ENCODE measurements at regions of chr20 and their contacts with region 1.

Region 1: DNA sequence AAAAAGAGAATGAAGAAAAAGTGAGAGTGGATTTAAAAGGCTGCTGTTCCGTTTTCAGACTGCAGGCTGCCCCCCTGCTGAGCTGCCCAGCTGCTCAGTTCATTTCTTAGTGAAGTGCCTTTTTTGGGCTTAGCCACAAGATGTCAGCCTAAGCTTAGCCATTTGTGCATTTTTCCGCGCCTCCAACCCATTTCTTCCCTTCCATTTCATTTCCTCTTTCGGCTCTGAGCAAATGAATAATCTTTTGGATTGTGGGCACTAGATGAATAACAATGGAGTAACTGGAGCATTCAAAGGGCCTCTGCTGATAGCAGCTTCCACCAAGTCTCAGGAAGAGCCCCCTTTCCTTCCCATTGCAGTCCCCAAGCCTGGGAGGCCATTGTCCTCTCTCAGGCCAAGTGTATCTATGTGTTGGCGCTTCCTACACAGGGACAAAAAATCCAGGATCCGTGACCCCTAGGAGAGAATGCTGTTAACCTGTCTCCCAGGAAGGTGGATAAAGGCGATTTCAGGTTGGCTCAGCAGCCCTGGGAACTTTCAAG is 83.5 kb upstream of the SPTLC3 start:
- DNase-seq: peak; percentile 63 to 69
- H3K4me3 ChIP-seq: no peak overlapping the region
- H3K27ac ChIP-seq: no peak overlapping the region
- H3K4me1 ChIP-seq: peaks cover 34% of the 10 kb centered on the region
- H3K27me3 ChIP-seq: no peaks in the 10 kb centered on the region
- CTCF ChIP-seq: peak; percentile 85

Region 2: DNA sequence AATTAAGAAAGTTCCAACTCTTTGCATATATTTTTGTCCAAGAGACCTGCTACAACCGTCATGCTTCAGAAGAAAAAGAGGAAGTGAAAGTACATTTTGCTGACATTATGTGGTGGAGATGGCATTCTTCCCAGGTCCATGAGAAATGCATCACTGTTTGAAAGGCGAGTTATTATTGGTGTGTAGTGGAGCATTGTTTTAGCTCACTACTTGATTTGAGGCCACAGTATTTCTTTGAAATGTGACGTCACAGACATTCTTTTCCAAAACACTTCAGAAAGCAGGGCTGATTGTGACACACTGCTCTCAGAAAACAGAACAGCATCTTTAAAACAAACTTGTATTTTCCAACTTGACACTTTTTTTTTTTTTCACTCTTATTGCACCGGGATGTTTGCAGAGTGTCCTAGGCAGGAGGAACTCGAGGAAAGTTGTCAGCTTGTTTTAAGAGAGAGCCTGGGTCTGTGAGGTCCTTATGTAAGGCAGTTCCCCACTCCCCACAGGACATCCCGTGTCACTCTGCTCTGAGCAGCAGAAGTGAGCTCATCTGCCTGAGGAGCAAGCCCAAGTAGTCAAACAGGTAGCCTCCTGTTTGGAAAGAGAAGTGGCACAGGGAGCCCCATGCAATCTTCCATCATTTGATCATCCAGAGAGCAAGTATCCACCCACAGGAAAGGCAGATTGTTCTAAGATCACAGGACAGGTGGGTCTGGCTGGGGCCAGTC is 84.6 kb after region 1 on chr20:
- CTCF ChIA-PET with region 1: no interaction called
- POLR2A ChIA-PET with region 1: no interaction called
- intact Hi-C with region 1: loop called (anchors 1 kb)
- DNase-seq: peak; percentile 38 to 72
- H3K4me3 ChIP-seq: peak overlapping the region; percentile 50
- H3K27ac ChIP-seq: peak overlapping the region; percentile 63
- H3K4me1 ChIP-seq: peaks cover 28% of the 10 kb centered on the region
- H3K27me3 ChIP-seq: no peaks in the 10 kb centered on the region
- CTCF ChIP-seq: no peak

Region 3: DNA sequence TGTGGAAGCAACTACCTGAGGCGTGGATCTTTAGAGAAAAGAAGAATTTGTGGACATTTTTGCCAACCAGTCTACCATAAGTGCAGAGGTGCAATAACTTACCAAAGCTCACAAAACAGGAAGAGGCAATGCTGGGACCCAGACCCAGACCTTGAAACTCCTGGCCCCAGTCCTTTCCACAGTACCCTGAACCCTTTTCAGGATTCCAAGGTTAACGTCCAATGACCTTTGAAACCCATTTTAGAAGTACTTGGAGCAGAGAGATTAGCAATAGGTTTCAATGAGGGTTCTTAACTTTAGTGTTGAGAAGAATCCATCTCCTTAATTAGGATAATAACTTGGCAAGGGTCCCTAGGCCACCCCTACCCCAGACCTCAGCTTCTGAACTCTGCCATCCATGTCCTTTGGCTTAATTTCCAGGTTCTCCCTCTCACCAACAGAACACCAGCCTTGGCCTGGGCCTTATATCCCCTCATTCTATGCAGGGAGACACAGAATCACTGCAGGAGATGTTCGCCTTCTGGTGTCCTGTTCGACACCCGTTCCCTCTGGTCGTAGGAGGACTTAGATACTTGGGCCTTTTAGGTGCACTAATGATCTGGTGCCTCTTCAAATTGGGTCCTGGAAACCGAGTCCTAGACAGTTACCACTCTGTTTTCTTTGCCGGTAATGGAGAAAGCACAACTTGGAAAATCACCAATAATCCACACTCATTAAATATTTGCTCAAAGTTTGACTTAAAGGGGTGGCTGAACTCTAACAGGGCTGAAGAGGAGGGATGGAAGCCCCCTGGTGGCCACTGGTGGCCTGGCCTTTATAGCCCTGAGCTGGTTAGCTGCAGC is 336.4 kb after region 1 on chr20:
- CTCF ChIA-PET with region 1: no interaction called
- POLR2A ChIA-PET with region 1: interaction called, 11 read pairs
- intact Hi-C with region 1: no loop called
- DNase-seq: peak in 1 of 2 experiments; percentile 40
- H3K4me3 ChIP-seq: no peak overlapping the region
- H3K27ac ChIP-seq: no peak overlapping the region
- H3K4me1 ChIP-seq: no peaks in the 10 kb centered on the region
- H3K27me3 ChIP-seq: no peaks in the 10 kb centered on the region
- CTCF ChIP-seq: peak; percentile 84

Region 4: DNA sequence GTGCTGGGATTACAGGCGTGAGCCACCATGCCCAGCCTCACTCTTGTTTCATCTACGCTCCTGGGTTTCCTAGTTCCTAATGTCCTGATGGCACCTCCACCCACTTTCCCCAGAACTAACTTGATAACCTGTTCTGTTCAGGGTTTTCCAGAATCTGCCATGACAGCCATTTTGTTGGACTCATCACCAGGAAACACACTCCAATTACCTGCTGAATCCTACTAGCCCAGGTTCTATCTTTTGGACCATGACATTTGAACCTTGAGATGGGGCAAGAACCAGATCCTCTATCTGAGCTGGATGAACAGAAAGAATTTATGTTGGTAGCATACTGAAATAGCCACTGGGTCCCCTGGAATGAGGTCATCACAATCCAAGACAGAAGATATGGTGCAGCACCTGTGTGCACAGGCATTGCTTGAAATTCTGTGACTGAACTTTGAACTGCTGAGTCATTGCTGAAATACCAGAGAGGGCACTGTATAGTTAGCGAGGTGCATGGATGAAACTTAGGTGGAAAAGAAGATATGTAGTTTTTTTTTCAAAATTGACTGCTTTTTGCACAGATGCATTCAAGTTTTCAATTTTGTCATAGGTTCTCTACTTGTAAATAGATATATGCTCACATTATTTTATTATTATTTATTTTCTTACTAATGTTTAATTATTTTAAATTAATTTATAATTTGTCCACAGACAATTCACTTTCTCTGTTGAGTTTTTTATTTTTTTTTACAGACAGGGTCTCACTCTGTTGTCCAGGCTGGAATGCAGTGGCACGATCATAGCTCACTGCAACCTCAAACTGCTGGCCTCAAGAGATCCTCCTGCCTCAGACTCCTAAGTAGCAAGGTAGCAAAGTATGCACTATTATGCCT is 756.2 kb after region 1 on chr20:
- CTCF ChIA-PET with region 1: interaction called, 10 read pairs
- POLR2A ChIA-PET with region 1: no interaction called
- intact Hi-C with region 1: no loop called
- DNase-seq: peak in 1 of 2 experiments; percentile 4
- H3K4me3 ChIP-seq: no peak overlapping the region
- H3K27ac ChIP-seq: no peak overlapping the region
- H3K4me1 ChIP-seq: peaks cover 5% of the 10 kb centered on the region; the same call in 1 of the 2 replicates
- H3K27me3 ChIP-seq: no peaks in the 10 kb centered on the region
- CTCF ChIP-seq: no peak

Region 5: DNA sequence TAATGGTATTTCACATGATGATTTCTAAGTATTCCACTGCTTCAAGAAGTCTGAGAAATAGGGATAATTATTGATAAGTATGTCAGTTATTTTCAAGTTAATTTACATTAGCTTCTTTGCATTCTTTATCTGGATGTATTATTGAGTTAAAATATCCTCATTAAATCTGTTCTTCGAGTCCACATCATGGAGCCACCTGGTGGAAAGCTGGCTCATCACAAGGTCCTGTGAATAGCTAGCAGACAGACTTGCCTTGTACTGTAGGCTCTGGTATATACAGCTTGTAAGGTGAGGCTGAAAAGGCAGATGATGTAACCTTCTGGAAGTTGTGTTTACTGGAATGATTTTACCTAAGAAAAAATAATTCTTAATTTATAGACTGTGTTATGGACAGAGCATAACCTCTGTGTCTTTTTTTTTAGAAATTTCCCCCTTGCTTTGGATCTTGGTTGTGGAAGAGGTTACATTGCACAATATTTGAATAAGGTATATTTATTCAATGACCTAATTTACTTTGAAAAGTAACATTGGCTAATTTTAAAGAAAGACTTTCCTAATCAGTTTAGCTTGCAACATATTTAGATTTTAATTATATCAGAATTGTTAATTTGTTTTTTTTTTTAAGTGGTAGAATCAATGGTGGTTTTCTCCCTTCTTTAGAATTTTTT is 863.0 kb after region 1 on chr20:
- CTCF ChIA-PET with region 1: no interaction called
- POLR2A ChIA-PET with region 1: no interaction called
- intact Hi-C with region 1: loop called (anchors 1 kb)
- DNase-seq: peak; percentile 34 to 53
- H3K4me3 ChIP-seq: no peak overlapping the region
- H3K27ac ChIP-seq: no peak overlapping the region
- H3K4me1 ChIP-seq: peaks cover 21% of the 10 kb centered on the region
- H3K27me3 ChIP-seq: no peaks in the 10 kb centered on the region
- CTCF ChIP-seq: peak; percentile 66